ENCODE measurements at regions of chr6 and their contacts with region 1.

Region 1: GRCh38 chr6:111361648-111362047 is 121.4 kb downstream of the REV3L start:
- DNase-seq: peak in 6 of 10 donors; percentile 25 to 58 (median 42)
- H3K4me3 ChIP-seq: no peak overlapping the region
- H3K27ac ChIP-seq: no peak overlapping the region
- H3K27me3 ChIP-seq: no peaks in the 10 kb centered on the region
- CTCF ChIP-seq: peak in 55 of 56 donors; percentile 37 to 79 (median 60)

Region 2: DNA sequence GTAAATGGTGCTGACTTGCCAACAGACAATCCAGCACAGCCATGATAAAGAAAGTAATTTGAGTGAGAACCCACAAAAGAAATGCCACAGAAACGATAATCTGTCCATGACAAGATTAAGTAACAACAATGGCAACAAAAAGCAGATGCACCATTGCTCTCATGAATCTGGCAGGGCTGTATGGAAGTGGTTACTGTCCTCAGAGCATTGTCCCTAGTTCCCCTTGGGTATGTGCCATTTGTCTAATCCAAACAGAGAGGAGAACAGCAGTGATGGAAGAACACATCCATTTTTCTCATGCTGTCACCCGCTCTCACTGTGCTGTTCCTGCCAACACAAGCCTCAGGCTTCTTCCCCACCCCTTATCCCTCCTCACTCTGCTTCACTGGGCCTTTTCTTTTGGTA is 55.5 kb after region 1 on chr6:
- intact Hi-C with region 1: loop called in 1 of 2 experiments (anchors 10 kb)
- DNase-seq: peak in 7 of 10 donors; percentile 20 to 69 (median 37)
- H3K4me3 ChIP-seq: peak overlapping the region in 31 of 59 donors; percentile 2 to 45 (median 23)
- H3K27ac ChIP-seq: peak overlapping the region in 54 of 59 donors; percentile 0 to 81 (median 58)
- H3K27me3 ChIP-seq: no peaks in the 10 kb centered on the region
- CTCF ChIP-seq: peak in 1 of 56 donors; percentile 23

Region 3: GRCh38 chr6:111642463-111643158 is 281.0 kb after region 1 on chr6:
- intact Hi-C with region 1: loop called (anchors 2 to 10 kb)
- DNase-seq: peak in 7 of 10 donors; percentile 28 to 69 (median 56)
- H3K4me3 ChIP-seq: peak overlapping the region in 9 of 59 donors; percentile 9 to 26 (median 18)
- H3K27ac ChIP-seq: no peak overlapping the region
- H3K27me3 ChIP-seq: no peaks in the 10 kb centered on the region
- CTCF ChIP-seq: peak in 55 of 56 donors; percentile 11 to 78 (median 60)